ENCODE measurements at regions of chr19 and their contacts with region 1.

Region 1: GRCh38 chr19:46022431-46023310 is at the start of gene PGLYRP1:
- DNase-seq: no peak
- ATAC-seq: no peak
- H3K4me3 ChIP-seq: peak within 1 kb of the TSS in 1 of 5 experiments; percentile 9
- H3K4me3 Mint-ChIP-seq: no peak within 1 kb of the TSS
- H3K27ac ChIP-seq: no peak within 1 kb of the TSS
- H3K27ac Mint-ChIP-seq: no peak within 1 kb of the TSS
- H3K4me1 ChIP-seq: no peaks in the 10 kb centered on the region
- H3K4me1 Mint-ChIP-seq: no peaks in the 10 kb centered on the region
- H3K27me3 ChIP-seq: peaks cover 0 to 22% (median 16%) of the 10 kb centered on the region in 4 experiments
- H3K27me3 Mint-ChIP-seq: peaks cover 26% of the 10 kb centered on the region
- CTCF ChIP-seq: no peak
- total RNA-seq, gene PGLYRP1: not detected in 2 replicates

Region 2: GRCh38 chr19:46056536-46056935 is 33.9 kb after region 1 on chr19:
- CTCF ChIA-PET with region 1: no interaction called
- POLR2A ChIA-PET with region 1: no interaction called
- intact Hi-C with region 1: no loop called
- DNase-seq: no peak
- ATAC-seq: no peak
- H3K4me3 ChIP-seq: no peak overlapping the region
- H3K4me3 Mint-ChIP-seq: no peak overlapping the region
- H3K27ac ChIP-seq: no peak overlapping the region
- H3K27ac Mint-ChIP-seq: no peak overlapping the region
- H3K4me1 ChIP-seq: no peaks in the 10 kb centered on the region
- H3K4me1 Mint-ChIP-seq: no peaks in the 10 kb centered on the region
- H3K27me3 ChIP-seq: peaks cover 0 to 19% (median 13%) of the 10 kb centered on the region in 4 experiments
- H3K27me3 Mint-ChIP-seq: peaks cover 45% of the 10 kb centered on the region
- CTCF ChIP-seq: no peak

Region 3: GRCh38 chr19:46265217-46265828 is 242.7 kb after region 1 on chr19:
- CTCF ChIA-PET with region 1: interaction called, 62 read pairs
- POLR2A ChIA-PET with region 1: no interaction called
- intact Hi-C with region 1: no loop called
- DNase-seq: peak; percentile 78
- ATAC-seq: peak; percentile 43
- H3K4me3 ChIP-seq: no peak overlapping the region
- H3K4me3 Mint-ChIP-seq: no peak overlapping the region
- H3K27ac ChIP-seq: no peak overlapping the region
- H3K27ac Mint-ChIP-seq: no peak overlapping the region
- H3K4me1 ChIP-seq: peaks cover 0 to 5% of the 10 kb centered on the region in 2 donors
- H3K4me1 Mint-ChIP-seq: peaks cover 7% of the 10 kb centered on the region
- H3K27me3 ChIP-seq: peaks cover 0 to 12% (median 3%) of the 10 kb centered on the region in 4 experiments
- H3K27me3 Mint-ChIP-seq: peaks cover 35% of the 10 kb centered on the region
- CTCF ChIP-seq: peak; percentile 91